ENCODE measurements at regions of chr13 and their contacts with region 1.

Region 1: DNA sequence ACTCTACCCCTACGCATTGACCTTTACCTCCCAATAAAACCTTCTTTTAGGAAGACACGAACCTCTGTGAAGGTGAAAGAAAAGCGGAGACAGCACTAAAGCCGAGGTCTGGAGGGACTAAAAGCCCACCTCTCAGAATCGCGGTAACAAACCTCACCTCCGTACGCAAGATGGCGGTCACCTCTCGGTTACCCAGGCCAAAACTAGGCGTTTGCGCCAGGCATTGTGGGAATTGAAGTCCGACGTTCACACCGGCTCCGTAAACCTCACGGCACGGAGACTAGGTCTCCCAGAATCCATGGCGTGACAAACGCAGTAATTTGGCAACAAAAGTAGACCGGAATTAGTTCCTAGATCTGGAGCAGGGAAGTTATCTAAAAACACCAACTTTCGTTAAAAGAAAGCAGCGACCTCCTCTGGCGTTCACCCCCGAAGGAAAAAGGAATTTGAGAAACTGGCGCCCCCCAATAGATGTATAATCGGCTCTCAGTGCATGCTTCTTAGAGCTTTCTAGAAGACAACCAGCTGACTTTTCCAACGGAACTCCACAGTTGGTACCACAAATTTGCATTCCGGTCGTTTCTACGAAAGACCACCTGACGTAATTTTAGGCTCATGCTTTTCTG is at the start of gene N4BP2L2:
- DNase-seq: peak; percentile 77
- ATAC-seq: peak; percentile 96
- H3K4me3 Mint-ChIP-seq: peak within 1 kb of the TSS; percentile 99
- H3K27ac Mint-ChIP-seq: peak within 1 kb of the TSS; percentile 100
- H3K4me1 Mint-ChIP-seq: peaks cover 50% of the 10 kb centered on the region
- H3K27me3 Mint-ChIP-seq: no peaks in the 10 kb centered on the region
- CTCF ChIP-seq: no peak
- total RNA-seq, gene N4BP2L2: 118 and 153 TPM in 2 replicates

Region 2: DNA sequence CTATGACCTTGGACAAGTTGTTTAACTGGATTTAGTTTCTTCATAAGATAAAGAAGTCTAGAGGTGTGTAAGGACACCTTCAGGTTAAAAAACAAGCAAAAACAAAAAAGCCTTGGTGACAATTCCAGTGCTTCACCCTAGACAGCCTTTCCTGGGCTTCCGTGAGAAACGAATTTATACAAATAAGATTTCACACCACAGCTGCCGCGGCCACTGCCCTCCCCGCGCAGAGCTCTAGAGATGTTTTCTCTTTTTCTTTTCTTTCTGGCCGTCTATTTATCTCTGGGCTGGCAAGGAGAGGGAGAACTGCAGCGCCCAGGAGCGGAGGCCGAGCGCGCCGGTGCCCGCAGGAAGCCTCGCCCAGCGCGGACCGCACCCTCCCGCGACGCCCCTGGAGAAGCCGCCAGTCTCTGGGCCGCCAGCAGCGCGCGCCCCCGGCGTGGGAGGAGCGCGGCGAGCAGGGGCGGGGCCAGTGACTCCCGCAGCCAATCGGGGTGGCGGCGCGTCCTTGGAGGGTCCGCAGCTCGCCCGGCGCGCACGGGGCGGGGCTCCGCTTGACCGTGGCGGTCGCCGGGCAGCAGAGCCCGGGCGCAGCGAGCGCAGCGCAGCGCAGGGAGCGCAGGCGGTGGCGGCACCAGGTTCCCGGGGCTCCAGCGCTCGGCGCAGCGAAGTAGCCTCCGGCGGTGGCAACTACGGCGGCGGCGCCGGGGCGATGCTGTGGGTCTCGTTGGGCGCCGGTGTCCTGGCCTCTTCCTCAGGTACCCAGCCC is 692.4 kb before region 1 on chr13:
- CTCF ChIA-PET with region 1: no interaction called
- POLR2A ChIA-PET with region 1: no interaction called
- intact Hi-C with region 1: loop called (anchors 10 kb)
- DNase-seq: peak; percentile 80
- ATAC-seq: peak; percentile 98
- H3K4me3 Mint-ChIP-seq: peak overlapping the region; percentile 83
- H3K27ac Mint-ChIP-seq: no peak overlapping the region
- H3K4me1 Mint-ChIP-seq: peaks cover 9% of the 10 kb centered on the region
- H3K27me3 Mint-ChIP-seq: peaks cover 27% of the 10 kb centered on the region
- CTCF ChIP-seq: no peak

Region 3: GRCh38 chr13:32278426-32278825 is 260.3 kb before region 1 on chr13:
- CTCF ChIA-PET with region 1: no interaction called
- POLR2A ChIA-PET with region 1: no interaction called
- intact Hi-C with region 1: no loop called
- DNase-seq: no peak
- ATAC-seq: no peak
- H3K4me3 Mint-ChIP-seq: no peak overlapping the region
- H3K27ac Mint-ChIP-seq: no peak overlapping the region
- H3K4me1 Mint-ChIP-seq: peaks cover 2% of the 10 kb centered on the region
- H3K27me3 Mint-ChIP-seq: no peaks in the 10 kb centered on the region
- CTCF ChIP-seq: no peak

Region 4: GRCh38 chr13:32315238-32316027 is 223.3 kb before region 1 on chr13 and contains the starts of genes BRCA2 and ZAR1L:
- CTCF ChIA-PET with region 1: no interaction called
- POLR2A ChIA-PET with region 1: interaction called, 24 read pairs
- intact Hi-C with region 1: loop called (anchors 1 kb)
- DNase-seq: peak; percentile 80
- ATAC-seq: peak; percentile 88
- H3K4me3 Mint-ChIP-seq: peak within 1 kb of the TSS; percentile 94
- H3K27ac Mint-ChIP-seq: peak within 1 kb of the TSS; percentile 100
- H3K4me1 Mint-ChIP-seq: peaks cover 14% of the 10 kb centered on the region
- H3K27me3 Mint-ChIP-seq: no peaks in the 10 kb centered on the region
- CTCF ChIP-seq: no peak
- total RNA-seq, gene BRCA2: 4.5 and 6.6 TPM in 2 replicates
- total RNA-seq, gene ZAR1L: not detected in 2 replicates

Region 5: DNA sequence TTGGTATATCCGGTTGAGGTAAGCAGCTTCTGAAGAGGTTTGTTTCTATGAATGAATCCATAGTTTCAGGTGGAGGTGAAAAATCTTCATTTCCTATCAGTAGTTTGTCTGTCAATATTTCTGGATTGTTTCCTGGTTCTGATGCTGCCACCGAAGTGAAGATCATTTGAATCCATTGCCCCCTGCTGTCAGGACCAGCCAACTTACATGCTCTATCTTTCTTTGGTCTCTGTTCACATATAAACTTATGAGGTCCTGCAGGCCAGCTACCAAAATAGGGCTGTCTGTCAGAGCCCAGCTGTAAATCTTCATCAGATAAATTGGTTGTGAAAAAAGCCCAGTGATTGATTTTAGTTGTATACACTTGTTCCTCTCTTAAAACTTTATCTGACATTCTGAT is 95.6 kb before region 1 on chr13:
- CTCF ChIA-PET with region 1: no interaction called
- POLR2A ChIA-PET with region 1: no interaction called
- intact Hi-C with region 1: loop called (anchors 5 kb)
- DNase-seq: no peak
- ATAC-seq: peak; percentile 84
- H3K4me3 Mint-ChIP-seq: peak overlapping the region; percentile 15
- H3K27ac Mint-ChIP-seq: peak overlapping the region; percentile 71
- H3K4me1 Mint-ChIP-seq: peaks cover 21% of the 10 kb centered on the region
- H3K27me3 Mint-ChIP-seq: no peaks in the 10 kb centered on the region
- CTCF ChIP-seq: peak; percentile 26

Region 6: GRCh38 chr13:32548837-32549236 is 10.1 kb after region 1 on chr13:
- CTCF ChIA-PET with region 1: no interaction called
- POLR2A ChIA-PET with region 1: no interaction called
- intact Hi-C with region 1: no loop called
- DNase-seq: no peak
- ATAC-seq: no peak
- H3K4me3 Mint-ChIP-seq: no peak overlapping the region
- H3K27ac Mint-ChIP-seq: no peak overlapping the region
- H3K4me1 Mint-ChIP-seq: peaks cover 14% of the 10 kb centered on the region
- H3K27me3 Mint-ChIP-seq: peaks cover 3% of the 10 kb centered on the region
- CTCF ChIP-seq: no peak

Region 7: GRCh38 chr13:32650705-32651311 is 112.1 kb after region 1 on chr13:
- CTCF ChIA-PET with region 1: no interaction called
- POLR2A ChIA-PET with region 1: no interaction called
- intact Hi-C with region 1: loop called (anchors 2 kb)
- DNase-seq: no peak
- ATAC-seq: peak; percentile 85
- H3K4me3 Mint-ChIP-seq: no peak overlapping the region
- H3K27ac Mint-ChIP-seq: no peak overlapping the region
- H3K4me1 Mint-ChIP-seq: peaks cover 54% of the 10 kb centered on the region
- H3K27me3 Mint-ChIP-seq: no peaks in the 10 kb centered on the region
- CTCF ChIP-seq: peak; percentile 78

Region 8: DNA sequence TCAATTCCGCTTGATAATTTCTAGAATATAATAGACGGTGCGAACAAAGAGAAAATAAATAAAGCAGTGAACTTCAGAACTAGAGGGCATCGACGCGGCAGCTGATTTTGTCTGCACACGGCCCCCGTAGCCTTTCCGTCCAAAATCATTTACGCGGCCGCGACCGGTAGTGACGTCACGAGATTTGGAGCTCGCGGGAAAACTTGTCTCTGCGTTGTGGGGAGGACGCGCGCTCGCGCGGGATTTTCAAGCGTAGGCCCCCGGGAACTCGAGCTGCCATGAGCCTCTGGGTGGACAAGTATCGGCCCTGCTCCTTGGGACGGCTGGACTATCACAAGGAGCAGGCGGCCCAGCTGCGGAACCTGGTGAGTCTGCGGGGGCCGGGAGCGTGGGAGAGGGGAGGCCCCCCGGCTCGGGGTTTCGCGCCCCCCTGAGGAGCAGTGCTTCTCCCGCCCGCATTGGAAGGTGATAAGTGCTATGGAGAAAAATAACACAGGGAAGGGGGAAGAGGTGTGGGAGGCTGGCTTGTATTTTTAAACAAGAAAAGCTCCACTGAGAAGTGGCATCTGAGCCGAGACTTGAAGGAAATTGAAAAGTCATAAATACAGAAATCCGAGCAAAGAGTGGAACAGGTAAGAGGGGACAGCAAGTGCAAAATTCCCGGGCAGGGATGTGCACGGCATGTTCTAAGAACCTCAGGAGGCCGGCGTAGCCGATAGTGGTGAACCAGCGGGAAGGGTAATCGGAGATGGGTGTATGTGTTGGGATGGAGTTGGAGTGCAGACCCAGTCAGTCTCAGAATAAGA is 1279.4 kb after region 1 on chr13 and contains the start of gene RFC3:
- CTCF ChIA-PET with region 1: no interaction called
- POLR2A ChIA-PET with region 1: no interaction called
- intact Hi-C with region 1: loop called (anchors 1 kb)
- DNase-seq: peak; percentile 84
- ATAC-seq: peak; percentile 94
- H3K4me3 Mint-ChIP-seq: peak within 1 kb of the TSS; percentile 93
- H3K27ac Mint-ChIP-seq: peak within 1 kb of the TSS; percentile 91
- H3K4me1 Mint-ChIP-seq: peaks cover 19% of the 10 kb centered on the region
- H3K27me3 Mint-ChIP-seq: peaks cover 5% of the 10 kb centered on the region
- CTCF ChIP-seq: no peak
- total RNA-seq, gene RFC3: 13.5 and 14.3 TPM in 2 replicates